Mammary epithelial cell (primary cell): ENCODE measurements at regions of chr2 and their contacts with region 1.

Region 1: GRCh38 chr2:112726497-112727190 is 5.8 kb downstream of the NT5DC4 start:
- DNase-seq: peak; percentile 94
- H3K4me3 ChIP-seq: no peak overlapping the region
- H3K27ac ChIP-seq: peak overlapping the region; percentile 62
- H3K4me1 ChIP-seq: peaks cover 26% of the 10 kb centered on the region
- H3K27me3 ChIP-seq: no peaks in the 10 kb centered on the region
- CTCF ChIP-seq: peak; percentile 94 to 99

Region 2: DNA sequence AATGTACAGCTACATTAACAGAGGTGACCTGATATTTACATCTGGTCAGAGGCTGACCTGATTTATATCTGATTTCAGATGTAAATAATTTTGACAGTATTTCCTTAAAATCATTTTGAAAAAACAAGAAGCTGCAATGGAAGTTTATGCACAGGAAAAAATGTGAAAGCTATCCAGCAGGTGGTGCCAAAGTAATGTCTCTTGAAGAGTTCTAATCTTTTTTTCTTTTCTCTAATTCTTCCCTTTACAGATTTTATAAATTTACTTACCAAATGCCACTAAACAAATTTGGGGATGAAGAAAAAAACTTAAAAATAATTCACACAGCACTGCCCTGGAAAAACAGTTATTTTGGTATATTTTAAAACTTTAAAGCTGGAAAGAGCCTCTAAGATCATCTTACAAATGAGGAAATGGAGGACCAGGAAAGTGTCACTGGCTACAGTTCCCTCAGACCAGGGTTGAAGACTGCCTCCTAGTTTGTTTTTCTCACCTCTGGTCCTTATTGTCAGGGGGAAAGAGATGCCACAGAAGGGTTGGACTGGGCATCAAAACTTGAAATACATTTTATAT is 604.9 kb before region 1 on chr2:
- CTCF ChIA-PET with region 1: no interaction called
- dilution Hi-C with region 1: no loop called
- in situ Hi-C with region 1: no loop called
- intact Hi-C with region 1: loop called (anchors 5 kb)
- DNase-seq: peak; percentile 7
- H3K4me3 ChIP-seq: no peak overlapping the region
- H3K27ac ChIP-seq: no peak overlapping the region
- H3K4me1 ChIP-seq: no peaks in the 10 kb centered on the region
- H3K27me3 ChIP-seq: no peaks in the 10 kb centered on the region
- CTCF ChIP-seq: peak; percentile 40 to 59

Region 3: GRCh38 chr2:112481050-112481527 is 245.6 kb before region 1 on chr2:
- CTCF ChIA-PET with region 1: no interaction called
- dilution Hi-C with region 1: no loop called
- in situ Hi-C with region 1: no loop called
- intact Hi-C with region 1: loop called (anchors 1 kb)
- DNase-seq: peak; percentile 80
- H3K4me3 ChIP-seq: peak overlapping the region; percentile 58 to 84 (median 76)
- H3K27ac ChIP-seq: peak overlapping the region; percentile 46
- H3K4me1 ChIP-seq: peaks cover 16% of the 10 kb centered on the region
- H3K27me3 ChIP-seq: no peaks in the 10 kb centered on the region
- CTCF ChIP-seq: peak; percentile 71 to 94

Region 4: DNA sequence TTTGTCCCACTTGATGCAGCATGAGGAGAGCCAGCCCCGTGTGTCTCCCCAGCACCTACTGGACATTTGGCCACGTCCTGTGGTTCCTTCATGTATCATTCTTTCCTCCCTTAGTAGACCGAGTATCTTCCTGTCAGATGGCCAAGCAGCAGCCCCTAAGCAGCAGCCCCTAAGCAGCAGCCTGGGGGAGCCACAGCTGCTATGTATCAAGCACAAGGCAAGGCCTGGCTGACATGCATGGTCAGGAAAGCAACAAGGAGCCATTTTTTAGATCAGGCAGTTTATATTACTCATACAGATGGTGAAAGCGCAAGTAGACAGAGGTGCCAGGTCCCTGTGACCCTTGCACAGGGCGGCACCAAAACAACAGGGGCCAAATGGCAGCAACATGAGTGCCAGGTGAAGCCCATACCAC is 120.1 kb before region 1 on chr2:
- CTCF ChIA-PET with region 1: no interaction called
- dilution Hi-C with region 1: no loop called
- in situ Hi-C with region 1: loop called (anchors 5 to 10 kb)
- intact Hi-C with region 1: no loop called
- DNase-seq: no peak
- H3K4me3 ChIP-seq: no peak overlapping the region
- H3K27ac ChIP-seq: no peak overlapping the region
- H3K4me1 ChIP-seq: peaks cover 5% of the 10 kb centered on the region
- H3K27me3 ChIP-seq: no peaks in the 10 kb centered on the region
- CTCF ChIP-seq: no peak

Region 5: DNA sequence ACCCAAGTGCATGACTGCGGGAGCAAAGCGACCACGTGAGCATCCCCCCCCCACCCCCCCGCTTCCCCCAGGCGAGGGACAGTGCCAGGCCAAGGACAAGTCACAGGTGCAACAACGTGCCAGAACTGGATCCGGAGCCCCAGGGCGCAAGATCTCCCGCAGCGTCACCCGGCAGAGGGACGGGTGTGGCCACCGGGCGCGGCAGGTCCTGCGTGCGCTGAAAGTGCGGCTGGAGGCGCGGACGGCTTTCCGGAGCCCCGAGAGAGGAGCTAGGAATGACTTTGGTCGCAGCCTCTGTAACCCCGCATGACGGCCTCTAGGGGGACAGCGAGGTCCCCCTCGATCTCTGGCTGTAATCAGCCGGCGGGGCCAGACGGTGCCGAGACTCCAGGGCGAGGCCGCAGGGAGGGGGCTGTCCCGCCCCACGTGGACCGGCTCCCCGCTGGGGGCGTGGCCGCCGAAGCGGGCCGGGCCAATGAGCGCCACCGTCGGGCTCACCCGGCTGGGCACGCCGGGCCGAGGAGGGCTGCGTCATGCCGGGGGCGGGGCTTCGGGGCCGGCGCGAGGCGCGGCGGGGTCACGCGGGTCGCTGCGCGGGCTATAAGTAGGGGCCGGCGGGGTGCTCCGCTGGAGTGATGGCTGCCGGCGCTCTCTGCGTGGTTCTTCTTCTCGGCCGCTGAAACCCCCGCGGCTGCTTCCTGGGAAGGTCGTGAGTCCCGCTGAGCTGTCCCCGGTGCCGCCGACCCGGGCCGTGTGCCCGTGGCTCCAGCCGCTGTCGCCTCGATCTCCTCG is 81.1 kb before region 1 on chr2 and contains the start of gene SLC20A1:
- CTCF ChIA-PET with region 1: no interaction called
- dilution Hi-C with region 1: no loop called
- in situ Hi-C with region 1: no loop called
- intact Hi-C with region 1: loop called (anchors 1 kb)
- DNase-seq: peak; percentile 96
- H3K4me3 ChIP-seq: peak within 1 kb of the TSS; percentile 84 to 93 (median 85)
- H3K27ac ChIP-seq: peak within 1 kb of the TSS; percentile 94
- H3K4me1 ChIP-seq: peaks cover 51% of the 10 kb centered on the region
- H3K27me3 ChIP-seq: no peaks in the 10 kb centered on the region
- CTCF ChIP-seq: peak; percentile 21 to 40
- total RNA-seq, gene SLC20A1: 227 to 533 TPM

Region 6: GRCh38 chr2:112685271-112685884 is 41.3 kb before region 1 on chr2:
- CTCF ChIA-PET with region 1: no interaction called
- dilution Hi-C with region 1: loop called (anchors 5 kb)
- in situ Hi-C with region 1: no loop called
- intact Hi-C with region 1: no loop called
- DNase-seq: no peak
- H3K4me3 ChIP-seq: no peak overlapping the region
- H3K27ac ChIP-seq: no peak overlapping the region
- H3K4me1 ChIP-seq: peaks cover 18% of the 10 kb centered on the region
- H3K27me3 ChIP-seq: no peaks in the 10 kb centered on the region
- CTCF ChIP-seq: peak; percentile 22 to 37

Region 7: DNA sequence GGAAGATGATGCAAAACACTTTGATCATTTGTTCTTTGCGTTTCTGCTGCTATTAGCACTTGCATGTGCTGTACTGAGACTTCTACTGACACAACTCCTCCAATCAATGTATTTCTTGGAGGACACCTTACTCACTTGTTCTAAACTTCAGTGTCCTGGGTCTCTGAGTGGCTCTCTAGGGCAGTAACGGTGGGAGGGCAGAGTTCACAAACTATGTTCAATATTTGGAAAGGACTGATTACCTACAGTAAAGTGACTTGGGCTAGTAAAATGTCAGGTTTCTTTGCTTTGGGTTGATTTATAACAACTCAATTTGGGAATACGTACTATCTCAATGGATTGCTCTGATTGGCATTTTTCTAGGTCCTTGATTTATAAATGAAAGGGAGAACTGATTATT is 601.4 kb after region 1 on chr2:
- CTCF ChIA-PET with region 1: no interaction called
- dilution Hi-C with region 1: no loop called
- in situ Hi-C with region 1: no loop called
- intact Hi-C with region 1: no loop called
- DNase-seq: no peak
- H3K4me3 ChIP-seq: no peak overlapping the region
- H3K27ac ChIP-seq: peak overlapping the region; percentile 95
- H3K4me1 ChIP-seq: peaks cover 58% of the 10 kb centered on the region
- H3K27me3 ChIP-seq: no peaks in the 10 kb centered on the region
- CTCF ChIP-seq: no peak